Activated CD4-positive, alpha-beta T cell treated with anti-CD3 and anti-CD28 coated beads, Interleukin-2, amount 10 ng/mL, durations not matched to agents 24 days and 14 days (primary cell): ENCODE measurements at regions of chr9 and their contacts with region 1.

Region 1: GRCh38 chr9:128455849-128456612 is at the start of gene ODF2:
- DNase-seq: peak; percentile 100
- H3K4me3 Mint-ChIP-seq: peak within 1 kb of the TSS; percentile 91
- H3K27ac Mint-ChIP-seq: peak within 1 kb of the TSS; percentile 94
- H3K4me1 Mint-ChIP-seq: peaks cover 20% of the 10 kb centered on the region
- H3K27me3 Mint-ChIP-seq: no peaks in the 10 kb centered on the region
- total RNA-seq, gene ODF2: 60.8 and 64.8 TPM in 2 replicates

Region 2: GRCh38 chr9:128504485-128505413 is 48.7 kb after region 1 on chr9 and contains the start of gene GLE1:
- intact Hi-C with region 1: loop called (anchors 2 kb)
- DNase-seq: peak; percentile 100
- H3K4me3 Mint-ChIP-seq: peak within 1 kb of the TSS; percentile 96
- H3K27ac Mint-ChIP-seq: peak within 1 kb of the TSS; percentile 95
- H3K4me1 Mint-ChIP-seq: peaks cover 25% of the 10 kb centered on the region
- H3K27me3 Mint-ChIP-seq: no peaks in the 10 kb centered on the region
- total RNA-seq, gene GLE1: 53.3 and 54.1 TPM in 2 replicates

Region 3: GRCh38 chr9:128683340-128684278 is 227.6 kb after region 1 on chr9:
- intact Hi-C with region 1: loop called (anchors 1 kb)
- DNase-seq: peak; percentile 80
- H3K4me3 Mint-ChIP-seq: peak overlapping the region; percentile 95
- H3K27ac Mint-ChIP-seq: peak overlapping the region; percentile 96
- H3K4me1 Mint-ChIP-seq: peaks cover 42% of the 10 kb centered on the region
- H3K27me3 Mint-ChIP-seq: no peaks in the 10 kb centered on the region

Region 4: DNA sequence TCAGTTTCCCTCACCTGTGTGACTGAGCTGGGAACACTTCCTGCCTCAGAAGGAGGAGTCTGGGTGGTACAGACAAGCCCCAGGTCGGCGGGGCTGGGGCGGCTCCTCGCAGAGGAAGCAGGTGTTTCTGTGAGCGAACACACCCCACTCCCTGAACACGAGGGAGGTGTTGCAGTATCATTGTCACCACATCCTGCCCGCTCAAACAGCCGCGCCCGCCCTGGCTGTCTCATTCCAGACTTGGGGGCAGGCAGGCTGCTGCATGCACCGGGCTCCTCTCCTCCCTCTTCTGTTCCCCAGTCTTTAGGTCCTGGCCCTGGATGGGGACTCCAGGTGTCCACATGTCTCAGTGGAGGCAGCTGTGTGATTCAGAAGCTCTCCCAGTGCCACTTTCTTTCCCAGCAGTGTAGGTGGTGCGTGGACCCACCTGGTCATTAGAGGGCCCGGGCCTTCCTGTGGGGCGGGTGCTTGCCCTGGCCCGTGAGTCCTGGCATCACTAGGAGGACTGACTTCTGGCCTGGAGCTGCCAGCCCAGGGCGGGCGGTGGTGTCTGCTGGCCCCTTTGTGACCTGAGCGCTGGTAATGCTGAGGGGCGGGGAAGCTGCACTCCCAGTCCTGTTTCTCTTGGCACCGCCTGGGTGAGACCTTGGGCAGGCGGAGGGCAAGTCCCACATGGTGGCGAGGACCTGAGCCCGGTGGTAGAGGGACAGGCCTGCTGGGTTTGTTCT is 446.5 kb after region 1 on chr9:
- intact Hi-C with region 1: loop called (anchors 5 kb)
- DNase-seq: peak; percentile 95
- H3K4me3 Mint-ChIP-seq: peak overlapping the region; percentile 76
- H3K27ac Mint-ChIP-seq: peak overlapping the region; percentile 89
- H3K4me1 Mint-ChIP-seq: peaks cover 57% of the 10 kb centered on the region
- H3K27me3 Mint-ChIP-seq: no peaks in the 10 kb centered on the region